ENCODE measurements at regions of chr6 and their contacts with region 1.

Region 1: GRCh38 chr6:104682722-104683643 is 176.7 kb downstream of the HACE1 start:
- DNase-seq: no peak
- H3K4me3 ChIP-seq: no peak overlapping the region
- CTCF ChIP-seq: peak; percentile 80

Region 2: DNA sequence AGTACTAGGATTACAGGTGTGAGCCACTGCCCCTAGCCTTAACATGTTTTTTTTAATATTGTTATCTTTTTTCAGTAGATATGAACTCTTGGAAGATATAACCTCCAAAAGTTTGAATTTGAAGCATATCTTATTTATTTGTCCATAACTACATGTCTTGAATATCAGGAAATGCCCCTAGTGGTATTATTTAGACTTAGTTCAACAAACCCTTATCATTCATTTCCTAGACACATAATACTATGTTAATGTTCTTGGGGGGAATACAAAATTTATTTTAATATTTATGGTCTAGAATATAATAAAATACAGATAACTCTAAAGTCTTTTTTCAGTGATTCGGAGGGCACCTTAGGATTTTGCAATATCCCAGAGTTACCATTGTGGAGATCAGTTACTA is 16.0 kb after region 1 on chr6:
- CTCF ChIA-PET with region 1: interaction called, 16 read pairs
- POLR2A ChIA-PET with region 1: no interaction called
- DNase-seq: no peak
- H3K4me3 ChIP-seq: no peak overlapping the region
- CTCF ChIP-seq: no peak

Region 3: DNA sequence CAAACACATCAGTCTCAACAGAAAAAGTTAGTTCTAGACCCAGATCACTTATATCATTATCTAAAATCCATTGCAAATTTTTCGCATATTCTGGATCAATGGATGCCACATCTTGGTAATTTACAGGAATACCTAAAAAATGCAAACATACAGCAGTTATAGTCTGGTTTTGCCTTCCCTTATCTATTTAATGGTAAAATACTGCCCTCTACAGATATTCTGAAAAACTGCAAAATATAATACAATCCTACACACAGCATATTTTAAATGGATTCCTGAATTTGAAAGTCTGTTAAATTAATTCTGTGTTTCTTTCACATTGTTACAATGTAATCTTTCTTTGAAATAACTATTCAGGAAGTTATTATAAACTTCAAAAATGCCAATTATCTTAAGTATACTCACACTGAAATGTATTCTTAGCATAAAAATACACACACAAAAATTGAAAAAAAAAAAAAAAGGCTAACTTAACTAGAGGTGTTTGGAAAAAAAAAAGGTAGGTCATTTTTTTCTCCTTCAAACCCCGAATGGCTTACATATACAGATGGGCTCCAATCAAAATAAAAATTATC is 88.4 kb after region 1 on chr6:
- CTCF ChIA-PET with region 1: interaction called, 11 read pairs
- POLR2A ChIA-PET with region 1: no interaction called
- DNase-seq: no peak
- H3K4me3 ChIP-seq: no peak overlapping the region
- CTCF ChIP-seq: no peak

Measured in AG04449 (cell line).